PC-3 (cell line): ENCODE measurements at regions of chr3 and their contacts with region 1.

Region 1: DNA sequence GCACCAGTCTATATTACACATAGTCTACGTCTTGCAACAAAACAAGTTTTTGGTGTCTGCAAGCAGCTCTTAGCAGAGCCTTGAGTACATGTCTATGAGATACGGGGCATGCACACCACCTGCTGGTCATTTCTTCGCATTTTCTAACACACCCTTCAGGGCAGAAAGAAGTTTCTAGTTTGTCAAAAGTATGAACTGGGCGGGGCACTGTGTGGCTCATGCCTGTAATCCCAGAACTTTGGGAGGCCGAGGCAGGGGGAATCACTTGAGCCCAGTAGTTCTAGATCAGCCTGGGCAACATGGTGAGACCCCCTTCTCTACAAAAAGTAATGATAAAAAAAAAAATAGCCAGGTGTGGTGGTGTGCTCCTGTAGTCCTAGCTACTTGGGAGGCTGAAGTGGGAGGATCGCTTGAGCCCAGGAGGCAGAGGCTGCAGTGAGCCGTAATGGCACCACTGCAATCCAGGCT is 64.2 kb upstream of the ARL8B start:
- DNase-seq: peak; percentile 95
- ATAC-seq: peak; percentile 98
- H3K4me3 ChIP-seq: no peak overlapping the region
- H3K27ac ChIP-seq: peak overlapping the region; percentile 27
- H3K4me1 ChIP-seq: peaks cover 16% of the 10 kb centered on the region
- H3K27me3 ChIP-seq: no peaks in the 10 kb centered on the region
- CTCF ChIP-seq: peak; percentile 85

Region 2: DNA sequence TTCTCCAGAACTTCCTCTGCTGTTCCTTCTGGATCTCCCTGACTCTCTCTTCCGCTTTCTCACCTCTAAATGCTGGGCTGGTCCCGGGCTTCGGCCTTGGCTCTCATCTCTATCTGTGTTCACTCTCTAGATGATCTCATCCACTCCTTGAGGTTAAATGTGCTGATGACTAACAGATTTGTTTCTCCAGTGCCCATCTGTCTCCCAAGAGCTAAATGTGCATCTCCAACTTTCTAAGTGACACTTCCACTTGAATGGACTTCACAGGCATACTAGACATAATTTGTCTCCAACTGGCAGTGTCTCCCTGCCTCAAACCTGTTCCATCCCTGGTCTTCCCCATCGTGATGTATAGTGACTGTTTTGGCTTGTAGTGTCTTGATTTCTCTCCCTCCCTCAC is 469.4 kb before region 1 on chr3:
- CTCF ChIA-PET with region 1: no interaction called
- POLR2A ChIA-PET with region 1: no interaction called
- intact Hi-C with region 1: no loop called
- DNase-seq: peak; percentile 51
- ATAC-seq: peak; percentile 89
- H3K4me3 ChIP-seq: no peak overlapping the region
- H3K27ac ChIP-seq: no peak overlapping the region
- H3K4me1 ChIP-seq: peaks cover 19% of the 10 kb centered on the region
- H3K27me3 ChIP-seq: no peaks in the 10 kb centered on the region
- CTCF ChIP-seq: no peak

Region 3: GRCh38 chr3:4670352-4670751 is 387.5 kb before region 1 on chr3:
- CTCF ChIA-PET with region 1: no interaction called
- POLR2A ChIA-PET with region 1: no interaction called
- intact Hi-C with region 1: loop called (anchors 5 kb)
- DNase-seq: peak; percentile 57
- ATAC-seq: peak; percentile 88
- H3K4me3 ChIP-seq: no peak overlapping the region
- H3K27ac ChIP-seq: no peak overlapping the region
- H3K4me1 ChIP-seq: no peaks in the 10 kb centered on the region
- H3K27me3 ChIP-seq: no peaks in the 10 kb centered on the region
- CTCF ChIP-seq: peak; percentile 78

Region 4: DNA sequence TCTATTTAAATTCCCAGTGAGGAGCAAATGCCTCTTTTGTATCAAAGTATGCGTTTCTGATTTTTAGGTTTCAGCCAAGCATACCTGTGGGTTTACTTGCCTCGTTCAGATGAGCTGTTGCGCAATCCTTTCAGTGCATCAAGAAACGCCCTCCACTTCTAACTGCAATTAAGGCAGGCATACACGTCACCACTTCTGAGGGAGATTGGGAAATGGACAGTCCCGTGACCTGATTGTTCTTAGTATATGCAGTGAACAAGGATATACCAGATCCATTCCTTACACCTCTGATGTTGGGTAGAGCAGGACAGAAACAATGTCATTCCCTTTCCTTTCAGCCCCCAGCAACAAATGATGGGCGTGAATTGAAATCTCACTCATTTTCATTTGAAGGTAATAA is 345.7 kb before region 1 on chr3:
- CTCF ChIA-PET with region 1: interaction called, 21 read pairs
- POLR2A ChIA-PET with region 1: no interaction called
- intact Hi-C with region 1: loop called (anchors 1 kb)
- DNase-seq: peak; percentile 55
- ATAC-seq: no peak
- H3K4me3 ChIP-seq: no peak overlapping the region
- H3K27ac ChIP-seq: peak overlapping the region; percentile 18; the same call in 1 of the 2 replicates
- H3K4me1 ChIP-seq: peaks cover 28% of the 10 kb centered on the region
- H3K27me3 ChIP-seq: no peaks in the 10 kb centered on the region
- CTCF ChIP-seq: no peak

Region 5: DNA sequence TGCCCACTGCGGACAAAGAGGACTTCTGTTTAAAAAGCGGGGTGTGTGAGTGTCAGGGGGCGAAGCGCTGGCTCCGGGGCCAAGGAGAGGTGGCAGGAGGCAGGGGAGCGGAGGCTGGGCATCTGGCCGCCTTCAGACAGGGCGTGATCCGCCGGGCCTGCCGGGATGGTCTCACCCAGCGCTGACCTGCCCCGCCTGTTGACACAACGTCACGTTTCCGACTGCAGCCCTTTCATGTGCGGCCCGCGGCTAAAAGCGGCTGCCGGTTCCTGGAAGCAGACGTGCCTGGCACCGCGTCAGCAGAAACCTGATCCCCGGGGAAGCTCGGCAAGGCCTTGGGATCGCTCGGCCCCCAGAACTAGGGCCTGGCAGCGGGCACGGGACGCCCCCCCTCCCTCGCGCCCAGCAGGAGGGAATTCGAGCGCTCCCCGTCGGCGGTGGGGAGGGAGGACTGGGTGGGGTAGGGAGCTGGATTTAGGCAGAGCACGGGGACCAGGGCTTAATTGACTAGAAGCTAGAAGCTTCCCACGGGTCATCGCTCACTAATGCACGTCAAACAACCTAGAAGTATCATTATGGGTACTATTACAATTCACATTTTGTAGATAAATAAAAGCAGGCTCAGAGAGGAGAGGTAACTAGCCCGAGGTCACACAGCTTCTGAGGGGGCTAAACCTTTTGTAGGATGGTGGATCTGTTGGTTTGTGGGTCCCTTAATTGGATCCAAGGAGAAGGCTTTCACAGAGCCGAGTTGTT is 70.9 kb before region 1 on chr3:
- CTCF ChIA-PET with region 1: interaction called, 3 read pairs
- POLR2A ChIA-PET with region 1: no interaction called
- intact Hi-C with region 1: loop called (anchors 2 kb)
- DNase-seq: peak; percentile 98
- ATAC-seq: peak; percentile 69
- H3K4me3 ChIP-seq: peak overlapping the region; percentile 35; the same call in 1 of the 2 replicates
- H3K27ac ChIP-seq: peak overlapping the region; percentile 90
- H3K4me1 ChIP-seq: peaks cover 63% of the 10 kb centered on the region
- H3K27me3 ChIP-seq: no peaks in the 10 kb centered on the region
- CTCF ChIP-seq: 0 out of 2 replicates have a peak, but pooled peaks have one; percentile 25